PC-9 (cell line): ENCODE measurements at regions of chr7 and their contacts with region 1.

Region 1: GRCh38 chr7:120402079-120402767 is 129.2 kb downstream of the KCND2 start:
- DNase-seq: peak in 1 of 2 experiments; percentile 68
- H3K4me3 ChIP-seq: no peak overlapping the region
- H3K27ac ChIP-seq: peak overlapping the region; percentile 85
- H3K4me1 ChIP-seq: peaks cover 24% of the 10 kb centered on the region
- H3K27me3 ChIP-seq: no peaks in the 10 kb centered on the region
- CTCF ChIP-seq: no peak

Region 2: GRCh38 chr7:120460949-120461348 is 58.7 kb after region 1 on chr7:
- CTCF ChIA-PET with region 1: no interaction called
- POLR2A ChIA-PET with region 1: no interaction called
- intact Hi-C with region 1: no loop called
- DNase-seq: no peak
- H3K4me3 ChIP-seq: no peak overlapping the region
- H3K27ac ChIP-seq: no peak overlapping the region
- H3K4me1 ChIP-seq: no peaks in the 10 kb centered on the region
- H3K27me3 ChIP-seq: no peaks in the 10 kb centered on the region
- CTCF ChIP-seq: no peak

Region 3: DNA sequence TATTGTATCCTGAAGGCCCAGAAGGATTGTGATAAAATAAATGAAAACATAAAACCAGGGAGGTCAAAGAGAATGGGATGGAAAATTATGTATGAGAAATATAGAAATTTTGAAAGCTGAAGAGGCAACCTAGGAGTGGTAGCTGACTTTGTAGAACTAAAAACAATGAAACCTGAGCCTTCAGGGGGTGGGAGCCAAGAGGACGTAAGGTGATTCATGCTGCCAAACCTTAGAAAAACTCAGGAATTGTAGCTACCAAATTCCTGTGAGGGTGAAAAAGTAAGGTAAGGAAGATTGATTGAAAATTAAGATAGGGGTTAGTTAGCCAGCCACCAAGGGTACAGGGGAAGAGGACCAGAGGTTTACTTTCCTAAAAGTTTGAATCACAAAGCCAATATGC is 83.9 kb after region 1 on chr7:
- CTCF ChIA-PET with region 1: no interaction called
- POLR2A ChIA-PET with region 1: no interaction called
- intact Hi-C with region 1: no loop called
- DNase-seq: peak; percentile 24 to 45
- H3K4me3 ChIP-seq: no peak overlapping the region
- H3K27ac ChIP-seq: no peak overlapping the region
- H3K4me1 ChIP-seq: peaks cover 10% of the 10 kb centered on the region
- H3K27me3 ChIP-seq: no peaks in the 10 kb centered on the region
- CTCF ChIP-seq: no peak

Region 4: GRCh38 chr7:120564145-120564544 is 161.9 kb after region 1 on chr7:
- CTCF ChIA-PET with region 1: no interaction called
- POLR2A ChIA-PET with region 1: no interaction called
- intact Hi-C with region 1: no loop called
- DNase-seq: no peak
- H3K4me3 ChIP-seq: no peak overlapping the region
- H3K27ac ChIP-seq: no peak overlapping the region
- H3K4me1 ChIP-seq: no peaks in the 10 kb centered on the region
- H3K27me3 ChIP-seq: no peaks in the 10 kb centered on the region
- CTCF ChIP-seq: no peak

Region 5: DNA sequence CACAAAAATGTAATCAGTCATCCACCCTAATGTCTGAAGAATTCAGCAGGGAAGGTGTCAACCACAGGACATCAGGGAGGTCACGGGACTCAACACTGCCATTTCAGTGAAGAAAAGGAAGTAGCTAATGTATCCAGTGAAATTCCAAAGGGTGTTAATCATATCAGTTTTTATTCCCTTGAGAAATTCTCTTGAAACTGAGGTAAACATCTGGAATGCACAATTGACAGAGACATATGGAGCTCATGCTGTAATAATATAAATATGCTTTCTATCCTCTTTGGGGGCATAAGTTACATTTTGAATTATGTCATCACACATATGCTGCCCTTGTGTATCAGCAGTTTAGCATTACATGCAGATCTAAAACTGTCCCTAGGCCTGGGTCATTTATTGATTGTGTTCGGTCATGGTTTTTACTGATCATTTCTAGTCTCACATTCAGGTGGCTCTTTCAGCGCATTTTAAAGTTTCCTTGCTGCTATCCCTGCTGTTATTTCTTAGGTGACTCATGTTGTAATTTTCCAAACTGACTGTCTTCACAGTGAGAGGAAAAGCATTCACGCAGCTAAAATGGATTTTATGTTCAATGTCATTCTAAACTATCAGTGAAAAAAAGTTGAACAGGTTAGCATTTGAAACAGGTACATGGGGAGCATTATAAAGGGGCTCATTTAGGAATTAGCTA is 181.8 kb after region 1 on chr7:
- CTCF ChIA-PET with region 1: no interaction called
- POLR2A ChIA-PET with region 1: no interaction called
- intact Hi-C with region 1: loop called (anchors 5 kb)
- DNase-seq: peak; percentile 65 to 69
- H3K4me3 ChIP-seq: no peak overlapping the region
- H3K27ac ChIP-seq: no peak overlapping the region
- H3K4me1 ChIP-seq: peaks cover 12% of the 10 kb centered on the region
- H3K27me3 ChIP-seq: no peaks in the 10 kb centered on the region
- CTCF ChIP-seq: no peak

Region 6: DNA sequence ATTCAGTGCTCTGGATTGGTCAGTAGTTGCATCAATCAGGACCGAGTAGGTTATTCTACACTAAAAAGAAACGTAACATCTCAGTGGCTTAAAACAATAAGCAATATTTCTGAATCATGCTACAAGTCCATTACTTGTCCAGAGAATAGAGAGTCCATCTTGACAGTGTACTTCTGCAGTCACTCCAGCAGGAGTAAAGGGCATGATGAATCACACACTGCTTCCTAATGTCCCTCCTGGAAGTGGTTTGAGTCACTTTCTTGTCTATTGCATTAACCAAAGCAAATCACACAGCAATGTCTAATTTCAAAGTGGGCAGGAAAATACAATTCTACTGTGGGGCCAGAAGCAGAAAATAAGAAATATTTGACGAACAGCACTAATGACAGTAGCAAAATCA is 330.9 kb after region 1 on chr7:
- CTCF ChIA-PET with region 1: no interaction called
- POLR2A ChIA-PET with region 1: no interaction called
- intact Hi-C with region 1: loop called (anchors 5 kb)
- DNase-seq: no peak
- H3K4me3 ChIP-seq: no peak overlapping the region
- H3K27ac ChIP-seq: no peak overlapping the region
- H3K4me1 ChIP-seq: no peaks in the 10 kb centered on the region
- H3K27me3 ChIP-seq: no peaks in the 10 kb centered on the region
- CTCF ChIP-seq: no peak

Region 7: DNA sequence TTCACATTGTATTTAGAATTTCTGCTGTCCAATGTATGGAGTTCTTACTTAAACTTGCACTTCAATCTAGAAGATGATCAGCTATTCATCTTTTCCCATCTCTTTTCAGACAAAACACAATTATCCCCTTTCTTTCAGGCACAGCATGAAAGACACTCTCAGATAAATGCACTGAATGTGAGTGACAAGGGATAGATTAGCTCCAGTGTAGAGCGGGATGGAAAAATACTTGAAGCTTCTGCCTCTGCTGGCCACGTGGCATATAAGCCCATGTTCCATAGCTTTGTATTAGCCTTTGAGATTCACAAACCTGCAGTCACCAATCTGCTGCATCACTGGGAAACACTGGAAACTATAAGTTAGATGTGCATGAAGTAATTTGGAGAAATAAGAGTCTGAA is 1156.1 kb after region 1 on chr7:
- CTCF ChIA-PET with region 1: no interaction called
- POLR2A ChIA-PET with region 1: no interaction called
- intact Hi-C with region 1: no loop called
- DNase-seq: no peak
- H3K4me3 ChIP-seq: no peak overlapping the region
- H3K27ac ChIP-seq: no peak overlapping the region
- H3K4me1 ChIP-seq: no peaks in the 10 kb centered on the region
- H3K27me3 ChIP-seq: no peaks in the 10 kb centered on the region
- CTCF ChIP-seq: no peak